H1 (cell line): ENCODE measurements at regions of chr18 and their contacts with region 1.

Region 1: DNA sequence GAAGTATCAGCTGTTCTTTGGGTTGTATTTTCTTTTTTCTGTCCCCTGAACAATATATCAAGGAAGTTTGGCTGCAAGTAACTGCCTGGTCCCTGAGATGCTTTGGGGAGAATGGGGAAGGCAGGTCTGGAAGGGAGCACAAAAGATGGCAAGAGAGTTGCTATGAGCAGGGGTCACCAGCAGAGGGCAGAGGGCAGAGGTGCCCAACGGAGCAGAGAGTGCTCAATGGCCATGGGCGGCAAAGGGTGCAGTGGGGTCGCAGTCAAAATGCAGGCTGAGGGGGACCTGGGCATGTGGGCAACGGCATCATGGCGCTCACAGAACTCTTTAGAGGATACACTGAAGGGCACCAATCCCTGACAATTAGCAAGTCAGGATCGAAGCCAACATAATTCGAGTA is 107.7 kb upstream of the ATP8B1 start:
- DNase-seq: peak; percentile 13 to 89
- H3K4me3 ChIP-seq: no peak overlapping the region
- H3K27ac ChIP-seq: no peak overlapping the region
- H3K4me1 ChIP-seq: peaks cover 0 to 4% (median under 1%) of the 10 kb centered on the region in 4 experiments; a peak in 2 of 7 replicates
- H3K27me3 ChIP-seq: no peaks in the 10 kb centered on the region
- CTCF ChIP-seq: peak; percentile 71 to 98 (median 94)
- EP300 ChIP-seq: no peak
- POLR2A ChIP-seq: no peak
- RAD21 ChIP-seq: peak; percentile 51 to 67

Region 2: DNA sequence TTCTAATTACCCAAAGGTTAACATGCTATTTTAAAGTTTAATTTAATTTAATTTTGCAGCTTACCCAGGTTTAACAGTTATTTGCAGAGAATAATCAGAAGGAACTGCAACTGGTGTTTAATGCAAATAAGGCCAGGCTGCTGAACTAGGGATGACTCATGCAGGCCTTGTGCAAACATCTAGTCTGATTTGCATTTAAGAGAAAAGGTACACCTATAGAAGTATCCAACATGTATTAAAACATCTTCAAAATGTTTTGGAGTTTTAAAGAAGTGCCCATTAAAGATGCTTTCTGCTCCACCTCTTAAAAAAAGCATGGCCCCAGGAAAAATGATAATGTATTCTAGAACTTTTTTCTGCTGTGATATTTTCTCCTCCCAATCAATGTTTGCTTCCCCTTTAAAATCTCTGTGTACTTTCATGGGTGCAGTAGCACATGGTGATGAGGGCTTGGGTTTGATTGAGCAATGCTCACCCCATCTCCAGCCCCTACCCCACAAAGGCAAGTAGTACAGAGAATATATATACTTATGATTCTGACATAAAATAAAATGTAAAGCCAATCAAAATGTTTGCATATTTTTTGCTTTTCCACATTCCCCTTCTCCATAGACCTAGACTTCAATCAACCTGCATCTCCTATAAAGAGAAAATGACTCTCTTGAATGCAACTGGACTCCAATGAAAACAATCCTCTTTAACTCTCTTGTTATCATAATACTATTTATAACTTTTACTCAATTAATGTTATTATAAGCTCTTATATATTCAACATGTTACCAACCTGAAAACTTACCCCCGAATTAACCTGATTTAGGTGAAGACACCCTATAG is 161.8 kb before region 1 on chr18:
- CTCF ChIA-PET with region 1: no interaction called
- POLR2A ChIA-PET with region 1: no interaction called
- DNase-seq: no peak
- H3K4me3 ChIP-seq: no peak overlapping the region
- H3K27ac ChIP-seq: no peak overlapping the region
- H3K4me1 ChIP-seq: 0 out of 7 replicates have a peak, but pooled peaks cover 0 to 2% (median under 1%) of the 10 kb centered on the region in 4 experiments
- H3K27me3 ChIP-seq: no peaks in the 10 kb centered on the region
- CTCF ChIP-seq: no peak
- EP300 ChIP-seq: no peak
- POLR2A ChIP-seq: no peak
- RAD21 ChIP-seq: no peak

Region 3: GRCh38 chr18:57881818-57882413 is 28.9 kb before region 1 on chr18:
- CTCF ChIA-PET with region 1: interaction called, 17 read pairs
- POLR2A ChIA-PET with region 1: interaction called, 3 read pairs
- DNase-seq: peak in 1 of 2 experiments; percentile 61
- H3K4me3 ChIP-seq: no peak overlapping the region
- H3K27ac ChIP-seq: no peak overlapping the region
- H3K4me1 ChIP-seq: no peaks in the 10 kb centered on the region
- H3K27me3 ChIP-seq: no peaks in the 10 kb centered on the region
- CTCF ChIP-seq: peak; percentile 85 to 95 (median 93)
- EP300 ChIP-seq: no peak
- POLR2A ChIP-seq: no peak
- RAD21 ChIP-seq: peak; percentile 90 to 96

Region 4: GRCh38 chr18:57891707-57892391 is 19.0 kb before region 1 on chr18:
- CTCF ChIA-PET with region 1: interaction called, 17 read pairs
- POLR2A ChIA-PET with region 1: no interaction called
- DNase-seq: no peak
- H3K4me3 ChIP-seq: no peak overlapping the region
- H3K27ac ChIP-seq: no peak overlapping the region
- H3K4me1 ChIP-seq: no peaks in the 10 kb centered on the region
- H3K27me3 ChIP-seq: no peaks in the 10 kb centered on the region
- CTCF ChIP-seq: no peak
- EP300 ChIP-seq: no peak
- POLR2A ChIP-seq: no peak
- RAD21 ChIP-seq: no peak

Region 5: GRCh38 chr18:57898506-57899124 is 12.2 kb before region 1 on chr18:
- CTCF ChIA-PET with region 1: interaction called, 46 read pairs
- POLR2A ChIA-PET with region 1: no interaction called
- DNase-seq: no peak
- H3K4me3 ChIP-seq: no peak overlapping the region
- H3K27ac ChIP-seq: no peak overlapping the region
- H3K4me1 ChIP-seq: no peaks in the 10 kb centered on the region
- H3K27me3 ChIP-seq: no peaks in the 10 kb centered on the region
- CTCF ChIP-seq: no peak
- EP300 ChIP-seq: no peak
- POLR2A ChIP-seq: no peak
- RAD21 ChIP-seq: no peak

Region 6: DNA sequence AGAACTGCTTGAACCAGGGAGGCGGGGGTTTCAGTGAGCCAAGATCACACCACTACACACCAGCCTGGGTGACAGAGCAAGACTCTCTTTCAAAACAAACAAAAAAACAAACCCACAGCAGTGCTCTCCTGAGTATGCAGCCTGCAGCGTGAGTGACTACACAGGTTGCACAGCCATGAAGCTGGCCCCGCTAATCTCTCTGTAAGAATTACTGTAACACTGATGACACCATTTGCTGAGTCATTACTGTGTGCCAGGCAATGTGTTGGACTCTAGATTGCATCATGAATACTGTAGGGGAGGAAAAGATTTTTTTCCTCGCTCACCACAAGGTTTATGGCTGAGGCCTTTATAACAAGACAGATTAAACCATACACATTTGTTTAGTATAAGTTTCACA is 10.9 kb after region 1 on chr18:
- CTCF ChIA-PET with region 1: interaction called, 12 read pairs
- POLR2A ChIA-PET with region 1: no interaction called
- DNase-seq: no peak
- H3K4me3 ChIP-seq: no peak overlapping the region
- H3K27ac ChIP-seq: no peak overlapping the region
- H3K4me1 ChIP-seq: no peaks in the 10 kb centered on the region
- H3K27me3 ChIP-seq: no peaks in the 10 kb centered on the region
- CTCF ChIP-seq: no peak
- EP300 ChIP-seq: no peak
- POLR2A ChIP-seq: no peak
- RAD21 ChIP-seq: no peak

Region 7: DNA sequence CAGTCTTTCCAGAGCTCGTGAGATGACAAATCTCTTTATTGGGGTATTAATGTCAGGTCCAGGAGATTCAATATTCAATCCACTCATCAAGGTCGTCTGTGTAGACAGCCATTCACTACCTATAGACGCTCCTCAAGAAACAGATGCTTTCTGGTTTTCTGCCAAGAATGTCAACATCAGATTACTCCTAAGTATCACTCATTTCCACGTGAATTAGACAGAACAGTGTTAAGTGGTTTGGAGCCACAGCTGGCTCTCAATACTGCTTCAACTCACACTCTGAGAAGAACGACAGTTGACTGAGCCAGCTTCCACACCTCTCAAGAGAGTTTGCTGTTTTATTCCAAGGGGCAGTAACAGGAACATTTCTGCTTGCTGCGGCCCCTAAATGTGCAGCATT is 19.7 kb after region 1 on chr18:
- CTCF ChIA-PET with region 1: interaction called, 12 read pairs
- POLR2A ChIA-PET with region 1: no interaction called
- DNase-seq: no peak
- H3K4me3 ChIP-seq: no peak overlapping the region
- H3K27ac ChIP-seq: no peak overlapping the region
- H3K4me1 ChIP-seq: no peaks in the 10 kb centered on the region
- H3K27me3 ChIP-seq: no peaks in the 10 kb centered on the region
- CTCF ChIP-seq: no peak
- EP300 ChIP-seq: no peak
- POLR2A ChIP-seq: no peak
- RAD21 ChIP-seq: no peak

Region 8: GRCh38 chr18:58117786-58118403 is 207.1 kb after region 1 on chr18:
- CTCF ChIA-PET with region 1: interaction called, 12 read pairs
- POLR2A ChIA-PET with region 1: no interaction called
- DNase-seq: no peak
- H3K4me3 ChIP-seq: no peak overlapping the region
- H3K27ac ChIP-seq: no peak overlapping the region
- H3K4me1 ChIP-seq: peaks cover 0 to 16% (median 5%) of the 10 kb centered on the region in 4 experiments; a peak in 6 of 7 replicates
- H3K27me3 ChIP-seq: no peaks in the 10 kb centered on the region
- CTCF ChIP-seq: no peak
- EP300 ChIP-seq: no peak
- POLR2A ChIP-seq: no peak
- RAD21 ChIP-seq: no peak